B cell (primary cell): ENCODE measurements at regions of chr1 and their contacts with region 1.

Region 1: GRCh38 chr1:205284343-205285144 is 37.0 kb downstream of the NUAK2 start:
- DNase-seq: peak; percentile 82
- ATAC-seq: peak; percentile 48
- H3K4me3 ChIP-seq: peak overlapping the region in 3 of 5 experiments; percentile 13 to 47 (median 29)
- H3K4me3 Mint-ChIP-seq: peak overlapping the region; percentile 74
- H3K27ac ChIP-seq: peak overlapping the region; percentile 94
- H3K27ac Mint-ChIP-seq: peak overlapping the region; percentile 92
- H3K4me1 ChIP-seq: peaks cover 90 to 95% of the 10 kb centered on the region in 2 donors
- H3K4me1 Mint-ChIP-seq: peaks cover 82% of the 10 kb centered on the region
- H3K27me3 ChIP-seq: no peaks in the 10 kb centered on the region
- H3K27me3 Mint-ChIP-seq: no peaks in the 10 kb centered on the region
- CTCF ChIP-seq: no peak

Region 2: DNA sequence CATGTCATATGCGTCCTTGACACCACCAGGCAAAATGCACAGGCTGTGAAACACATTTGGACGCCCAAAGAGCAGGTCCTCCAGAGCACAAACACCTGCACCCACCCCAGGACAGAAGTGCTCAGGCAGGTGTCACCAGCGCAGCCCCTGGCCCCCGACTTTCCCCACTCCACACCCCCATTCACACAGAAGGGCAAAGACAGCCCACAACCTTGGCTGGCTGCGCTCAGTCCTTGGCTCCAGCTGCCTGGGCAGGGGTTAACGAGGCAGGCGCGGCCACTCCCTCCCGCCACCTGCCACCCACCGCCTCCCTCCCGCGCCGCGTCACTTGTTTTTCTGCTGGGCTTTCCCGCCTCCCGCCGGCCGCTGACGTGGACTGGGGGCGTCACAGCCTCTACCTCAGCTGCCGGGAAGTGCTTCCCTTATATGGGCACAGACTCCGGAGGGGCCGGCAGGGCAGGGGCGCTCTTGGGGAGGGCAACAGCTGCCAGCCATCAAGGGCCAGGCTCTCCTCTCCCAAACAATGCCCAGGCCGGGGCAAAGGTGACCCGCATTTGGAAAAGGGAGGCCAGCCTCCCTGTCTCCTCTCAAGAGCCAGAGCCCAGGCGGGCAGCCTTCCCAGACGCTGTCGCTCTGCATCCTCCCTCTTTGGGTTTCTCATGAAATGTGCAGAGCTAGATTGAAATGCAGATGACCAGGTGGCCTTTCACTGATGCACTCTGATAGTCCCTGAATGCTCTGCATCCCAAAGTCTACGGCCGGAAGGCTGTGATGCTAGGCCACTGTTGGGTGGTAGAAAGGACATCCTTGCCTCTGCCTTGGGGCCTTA is 1994.1 kb before region 1 on chr1:
- CTCF ChIA-PET with region 1: no interaction called
- POLR2A ChIA-PET with region 1: no interaction called
- intact Hi-C with region 1: loop called (anchors 5 kb)
- DNase-seq: peak; percentile 98
- ATAC-seq: peak; percentile 40
- H3K4me3 ChIP-seq: peak overlapping the region; percentile 45 to 66 (median 56)
- H3K4me3 Mint-ChIP-seq: peak overlapping the region; percentile 88
- H3K27ac ChIP-seq: peak overlapping the region; percentile 99 to 100
- H3K27ac Mint-ChIP-seq: peak overlapping the region; percentile 95
- H3K4me1 ChIP-seq: peaks cover 70 to 90% of the 10 kb centered on the region in 2 donors
- H3K4me1 Mint-ChIP-seq: peaks cover 87% of the 10 kb centered on the region
- H3K27me3 ChIP-seq: no peaks in the 10 kb centered on the region
- H3K27me3 Mint-ChIP-seq: no peaks in the 10 kb centered on the region
- CTCF ChIP-seq: no peak

Region 3: GRCh38 chr1:205042911-205043806 is 241.4 kb before region 1 on chr1 and contains the start of gene CNTN2:
- CTCF ChIA-PET with region 1: no interaction called
- POLR2A ChIA-PET with region 1: no interaction called
- intact Hi-C with region 1: no loop called
- DNase-seq: no peak
- ATAC-seq: no peak
- H3K4me3 ChIP-seq: no peak within 1 kb of the TSS
- H3K4me3 Mint-ChIP-seq: no peak within 1 kb of the TSS
- H3K27ac ChIP-seq: no peak within 1 kb of the TSS
- H3K27ac Mint-ChIP-seq: no peak within 1 kb of the TSS
- H3K4me1 ChIP-seq: no peaks in the 10 kb centered on the region
- H3K4me1 Mint-ChIP-seq: no peaks in the 10 kb centered on the region
- H3K27me3 ChIP-seq: peaks cover 0 to 47% (median 11%) of the 10 kb centered on the region in 4 experiments
- H3K27me3 Mint-ChIP-seq: peaks cover 63% of the 10 kb centered on the region
- CTCF ChIP-seq: no peak
- total RNA-seq, gene CNTN2: not detected in 2 replicates

Region 4: GRCh38 chr1:205273551-205273982 is 11.0 kb before region 1 on chr1:
- CTCF ChIA-PET with region 1: interaction called, 276 read pairs
- POLR2A ChIA-PET with region 1: interaction called, 131 read pairs
- intact Hi-C with region 1: loop called (anchors 1 kb)
- DNase-seq: peak; percentile 90
- ATAC-seq: peak; percentile 83
- H3K4me3 ChIP-seq: peak overlapping the region in 3 of 5 experiments; percentile 5 to 27 (median 23)
- H3K4me3 Mint-ChIP-seq: peak overlapping the region; percentile 78
- H3K27ac ChIP-seq: peak overlapping the region in 1 of 2 donors; percentile 37
- H3K27ac Mint-ChIP-seq: peak overlapping the region; percentile 94
- H3K4me1 ChIP-seq: peaks cover 51 to 54% of the 10 kb centered on the region in 2 donors
- H3K4me1 Mint-ChIP-seq: peaks cover 46% of the 10 kb centered on the region
- H3K27me3 ChIP-seq: no peaks in the 10 kb centered on the region
- H3K27me3 Mint-ChIP-seq: no peaks in the 10 kb centered on the region
- CTCF ChIP-seq: peak; percentile 97

Region 5: GRCh38 chr1:205313563-205314308 is 29.2 kb after region 1 on chr1:
- CTCF ChIA-PET with region 1: interaction called, 2,421 read pairs
- POLR2A ChIA-PET with region 1: interaction called, 372 read pairs
- intact Hi-C with region 1: loop called (anchors 1 kb)
- DNase-seq: peak; percentile 90
- ATAC-seq: peak; percentile 83
- H3K4me3 ChIP-seq: peak overlapping the region; percentile 39 to 74 (median 56)
- H3K4me3 Mint-ChIP-seq: peak overlapping the region; percentile 94
- H3K27ac ChIP-seq: peak overlapping the region; percentile 82 to 98
- H3K27ac Mint-ChIP-seq: peak overlapping the region; percentile 98
- H3K4me1 ChIP-seq: peaks cover 88 to 91% of the 10 kb centered on the region in 2 donors
- H3K4me1 Mint-ChIP-seq: peaks cover 93% of the 10 kb centered on the region
- H3K27me3 ChIP-seq: no peaks in the 10 kb centered on the region
- H3K27me3 Mint-ChIP-seq: no peaks in the 10 kb centered on the region
- CTCF ChIP-seq: no peak

Region 6: GRCh38 chr1:205354259-205354904 is 69.8 kb after region 1 on chr1:
- CTCF ChIA-PET with region 1: interaction called, 14 read pairs
- POLR2A ChIA-PET with region 1: interaction called, 7 read pairs
- intact Hi-C with region 1: no loop called
- DNase-seq: peak; percentile 78
- ATAC-seq: peak; percentile 58
- H3K4me3 ChIP-seq: no peak overlapping the region
- H3K4me3 Mint-ChIP-seq: no peak overlapping the region
- H3K27ac ChIP-seq: no peak overlapping the region
- H3K27ac Mint-ChIP-seq: no peak overlapping the region
- H3K4me1 ChIP-seq: peaks cover 16 to 20% of the 10 kb centered on the region in 2 donors
- H3K4me1 Mint-ChIP-seq: peaks cover 29% of the 10 kb centered on the region
- H3K27me3 ChIP-seq: peaks cover 0 to 4% (median 0%) of the 10 kb centered on the region in 4 experiments
- H3K27me3 Mint-ChIP-seq: peaks cover 19% of the 10 kb centered on the region
- CTCF ChIP-seq: peak; percentile 95

Region 7: GRCh38 chr1:205407970-205408369 is 123.4 kb after region 1 on chr1:
- CTCF ChIA-PET with region 1: no interaction called
- POLR2A ChIA-PET with region 1: no interaction called
- intact Hi-C with region 1: no loop called
- DNase-seq: no peak
- ATAC-seq: no peak
- H3K4me3 ChIP-seq: no peak overlapping the region
- H3K4me3 Mint-ChIP-seq: no peak overlapping the region
- H3K27ac ChIP-seq: no peak overlapping the region
- H3K27ac Mint-ChIP-seq: no peak overlapping the region
- H3K4me1 ChIP-seq: no peaks in the 10 kb centered on the region
- H3K4me1 Mint-ChIP-seq: peaks cover 2% of the 10 kb centered on the region
- H3K27me3 ChIP-seq: peaks cover 0 to 12% (median 7%) of the 10 kb centered on the region in 4 experiments
- H3K27me3 Mint-ChIP-seq: peaks cover 38% of the 10 kb centered on the region
- CTCF ChIP-seq: no peak

Region 8: GRCh38 chr1:206998816-206999215 is 1714.3 kb after region 1 on chr1:
- CTCF ChIA-PET with region 1: no interaction called
- POLR2A ChIA-PET with region 1: interaction called, 11 read pairs
- intact Hi-C with region 1: no loop called
- DNase-seq: no peak
- ATAC-seq: no peak
- H3K4me3 ChIP-seq: no peak overlapping the region
- H3K4me3 Mint-ChIP-seq: no peak overlapping the region
- H3K27ac ChIP-seq: no peak overlapping the region
- H3K27ac Mint-ChIP-seq: no peak overlapping the region
- H3K4me1 ChIP-seq: no peaks in the 10 kb centered on the region
- H3K4me1 Mint-ChIP-seq: no peaks in the 10 kb centered on the region
- H3K27me3 ChIP-seq: no peaks in the 10 kb centered on the region
- H3K27me3 Mint-ChIP-seq: peaks cover 9% of the 10 kb centered on the region
- CTCF ChIP-seq: no peak